PC-9 (cell line): ENCODE measurements at regions of chr7 and their contacts with region 1.

Region 1: DNA sequence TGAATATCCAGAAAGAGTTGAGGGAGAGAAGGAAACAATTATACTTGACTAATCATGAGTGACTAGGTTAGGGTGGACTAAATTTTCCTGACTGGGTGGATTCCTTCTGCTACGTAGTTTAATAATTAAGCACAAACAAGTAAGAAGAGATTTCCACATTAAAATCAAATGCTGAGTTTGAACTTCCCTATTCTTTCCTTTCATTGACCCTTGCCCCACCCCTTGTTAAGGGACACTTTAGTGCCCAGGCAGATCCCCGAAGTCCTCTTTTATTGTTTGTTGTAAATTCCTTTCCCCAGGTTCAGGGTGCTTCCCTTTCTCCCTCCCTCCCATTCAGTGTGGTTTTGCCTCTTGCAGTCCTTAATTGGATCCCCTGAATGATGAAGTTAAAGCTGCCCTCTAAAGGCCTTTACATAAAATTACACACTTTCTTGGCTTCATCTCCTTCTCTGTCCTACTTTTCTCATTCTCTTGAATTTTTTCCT is 8.8 kb upstream of the SPAM1 start:
- DNase-seq: no peak
- H3K4me3 ChIP-seq: no peak overlapping the region
- H3K27ac ChIP-seq: no peak overlapping the region
- H3K4me1 ChIP-seq: no peaks in the 10 kb centered on the region
- H3K27me3 ChIP-seq: no peaks in the 10 kb centered on the region
- CTCF ChIP-seq: peak; percentile 54; the same call in 1 of the 2 replicates

Region 2: DNA sequence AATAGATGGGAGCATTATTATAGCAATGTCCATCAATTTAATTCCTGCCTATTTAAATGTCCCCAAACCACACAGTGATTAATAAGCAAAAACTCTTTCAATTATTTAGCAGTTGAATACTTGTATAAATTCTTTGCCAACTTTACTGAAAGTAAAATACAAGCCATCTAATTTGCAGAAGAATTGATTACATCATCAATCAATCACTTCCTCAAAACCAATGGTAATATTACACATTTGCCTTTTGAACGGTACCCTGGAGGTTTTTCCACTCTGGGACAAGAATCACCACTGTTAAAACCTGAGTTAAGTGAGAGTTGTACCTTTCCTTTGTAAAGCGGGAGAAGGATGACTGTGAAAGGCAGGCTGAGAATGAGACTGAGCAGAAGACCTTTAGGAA is 1310.4 kb before region 1 on chr7:
- CTCF ChIA-PET with region 1: no interaction called
- POLR2A ChIA-PET with region 1: no interaction called
- intact Hi-C with region 1: loop called (anchors 5 kb)
- DNase-seq: no peak
- H3K4me3 ChIP-seq: no peak overlapping the region
- H3K27ac ChIP-seq: no peak overlapping the region
- H3K4me1 ChIP-seq: no peaks in the 10 kb centered on the region
- H3K27me3 ChIP-seq: no peaks in the 10 kb centered on the region
- CTCF ChIP-seq: no peak